ENCODE measurements at regions of chr9 and their contacts with region 1.

Region 1: DNA sequence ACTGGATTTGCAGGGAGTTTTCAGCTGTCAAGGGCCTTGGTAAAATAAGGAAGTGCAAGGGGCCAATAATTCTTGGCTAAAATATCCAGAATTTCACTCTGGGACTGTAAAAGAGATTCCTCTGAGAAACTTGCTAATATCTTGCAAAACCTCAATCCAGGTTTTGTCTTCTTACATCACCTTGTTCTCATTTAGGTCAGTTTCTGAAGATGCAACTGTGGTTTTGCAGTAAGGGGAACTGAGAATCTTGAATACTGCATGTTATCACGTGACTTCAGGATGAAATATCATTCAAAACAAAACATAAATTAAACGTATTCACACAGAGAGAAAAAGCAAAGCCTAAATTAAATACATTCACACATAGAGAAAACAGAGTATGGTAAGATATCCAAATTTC is 35.0 kb upstream of the RIC1 start:
- DNase-seq: peak; percentile 84
- ATAC-seq: peak; percentile 57
- H3K4me3 ChIP-seq: no peak overlapping the region
- H3K4me3 Mint-ChIP-seq: peak overlapping the region; percentile 50
- H3K27ac ChIP-seq: peak overlapping the region in 1 of 2 donors; percentile 40
- H3K27ac Mint-ChIP-seq: peak overlapping the region; percentile 69
- H3K4me1 ChIP-seq: peaks cover 41 to 44% of the 10 kb centered on the region in 2 donors
- H3K4me1 Mint-ChIP-seq: peaks cover 68% of the 10 kb centered on the region
- H3K27me3 ChIP-seq: no peaks in the 10 kb centered on the region
- H3K27me3 Mint-ChIP-seq: no peaks in the 10 kb centered on the region
- CTCF ChIP-seq: no peak

Region 2: GRCh38 chr9:4762108-4762885 is 831.6 kb before region 1 on chr9:
- CTCF ChIA-PET with region 1: interaction called, 29 read pairs
- POLR2A ChIA-PET with region 1: no interaction called
- intact Hi-C with region 1: no loop called
- DNase-seq: peak; percentile 87
- ATAC-seq: peak; percentile 73
- H3K4me3 ChIP-seq: peak overlapping the region; percentile 22 to 62 (median 56)
- H3K4me3 Mint-ChIP-seq: peak overlapping the region; percentile 82
- H3K27ac ChIP-seq: peak overlapping the region in 1 of 2 donors; percentile 28
- H3K27ac Mint-ChIP-seq: peak overlapping the region; percentile 17
- H3K4me1 ChIP-seq: peaks cover 10 to 20% of the 10 kb centered on the region in 2 donors
- H3K4me1 Mint-ChIP-seq: peaks cover 22% of the 10 kb centered on the region
- H3K27me3 ChIP-seq: no peaks in the 10 kb centered on the region
- H3K27me3 Mint-ChIP-seq: no peaks in the 10 kb centered on the region
- CTCF ChIP-seq: peak; percentile 89

Region 3: GRCh38 chr9:5450359-5451091 is 143.4 kb before region 1 on chr9 and contains the start of gene CD274:
- CTCF ChIA-PET with region 1: interaction called, 52 read pairs
- POLR2A ChIA-PET with region 1: interaction called, 4 read pairs
- intact Hi-C with region 1: loop called (anchors 2 kb)
- DNase-seq: peak; percentile 85
- ATAC-seq: peak; percentile 91
- H3K4me3 ChIP-seq: peak within 1 kb of the TSS; percentile 75 to 93 (median 81)
- H3K4me3 Mint-ChIP-seq: peak within 1 kb of the TSS; percentile 83
- H3K27ac ChIP-seq: peak within 1 kb of the TSS; percentile 72 to 83
- H3K27ac Mint-ChIP-seq: peak within 1 kb of the TSS; percentile 94
- H3K4me1 ChIP-seq: peaks cover 21 to 30% of the 10 kb centered on the region in 2 donors
- H3K4me1 Mint-ChIP-seq: peaks cover 49% of the 10 kb centered on the region
- H3K27me3 ChIP-seq: no peaks in the 10 kb centered on the region
- H3K27me3 Mint-ChIP-seq: no peaks in the 10 kb centered on the region
- CTCF ChIP-seq: peak; percentile 57
- total RNA-seq, gene CD274: 5.2 and 7.0 TPM in 2 replicates

Region 4: GRCh38 chr9:5529683-5530221 is 64.2 kb before region 1 on chr9:
- CTCF ChIA-PET with region 1: interaction called, 4 read pairs
- POLR2A ChIA-PET with region 1: no interaction called
- intact Hi-C with region 1: loop called (anchors 5 kb)
- DNase-seq: peak; percentile 72
- ATAC-seq: peak; percentile 73
- H3K4me3 ChIP-seq: peak overlapping the region in 1 of 5 experiments; percentile 10
- H3K4me3 Mint-ChIP-seq: peak overlapping the region; percentile 78
- H3K27ac ChIP-seq: no peak overlapping the region
- H3K27ac Mint-ChIP-seq: peak overlapping the region; percentile 5
- H3K4me1 ChIP-seq: peaks cover 36 to 42% of the 10 kb centered on the region in 2 donors
- H3K4me1 Mint-ChIP-seq: peaks cover 51% of the 10 kb centered on the region
- H3K27me3 ChIP-seq: no peaks in the 10 kb centered on the region
- H3K27me3 Mint-ChIP-seq: peaks cover 5% of the 10 kb centered on the region
- CTCF ChIP-seq: no peak

Region 5: GRCh38 chr9:5608298-5609225 is 14.7 kb after region 1 on chr9:
- CTCF ChIA-PET with region 1: interaction called, 22 read pairs
- POLR2A ChIA-PET with region 1: no interaction called
- intact Hi-C with region 1: no loop called
- DNase-seq: peak; percentile 52
- ATAC-seq: peak; percentile 78
- H3K4me3 ChIP-seq: peak overlapping the region in 4 of 5 experiments; percentile 25 to 64 (median 49)
- H3K4me3 Mint-ChIP-seq: peak overlapping the region; percentile 89
- H3K27ac ChIP-seq: peak overlapping the region; percentile 8 to 74
- H3K27ac Mint-ChIP-seq: peak overlapping the region; percentile 92
- H3K4me1 ChIP-seq: peaks cover 12 to 14% of the 10 kb centered on the region in 2 donors
- H3K4me1 Mint-ChIP-seq: peaks cover 37% of the 10 kb centered on the region
- H3K27me3 ChIP-seq: no peaks in the 10 kb centered on the region
- H3K27me3 Mint-ChIP-seq: no peaks in the 10 kb centered on the region
- CTCF ChIP-seq: no peak